ENCODE measurements at regions of chr2 and their contacts with region 1.

Region 1: GRCh38 chr2:239193925-239194677 is 206.7 kb downstream of the HDAC4 start:
- DNase-seq: peak in 1 of 2 experiments; percentile 55
- H3K4me3 ChIP-seq: no peak overlapping the region
- H3K27ac ChIP-seq: no peak overlapping the region
- H3K4me1 ChIP-seq: peaks cover 0 to 4% (median under 1%) of the 10 kb centered on the region in 4 experiments; a peak in 2 of 7 replicates
- H3K27me3 ChIP-seq: no peaks in the 10 kb centered on the region
- CTCF ChIP-seq: peak; percentile 49 to 74 (median 69)
- EP300 ChIP-seq: no peak
- POLR2A ChIP-seq: no peak
- RAD21 ChIP-seq: peak; percentile 53 to 60

Region 2: DNA sequence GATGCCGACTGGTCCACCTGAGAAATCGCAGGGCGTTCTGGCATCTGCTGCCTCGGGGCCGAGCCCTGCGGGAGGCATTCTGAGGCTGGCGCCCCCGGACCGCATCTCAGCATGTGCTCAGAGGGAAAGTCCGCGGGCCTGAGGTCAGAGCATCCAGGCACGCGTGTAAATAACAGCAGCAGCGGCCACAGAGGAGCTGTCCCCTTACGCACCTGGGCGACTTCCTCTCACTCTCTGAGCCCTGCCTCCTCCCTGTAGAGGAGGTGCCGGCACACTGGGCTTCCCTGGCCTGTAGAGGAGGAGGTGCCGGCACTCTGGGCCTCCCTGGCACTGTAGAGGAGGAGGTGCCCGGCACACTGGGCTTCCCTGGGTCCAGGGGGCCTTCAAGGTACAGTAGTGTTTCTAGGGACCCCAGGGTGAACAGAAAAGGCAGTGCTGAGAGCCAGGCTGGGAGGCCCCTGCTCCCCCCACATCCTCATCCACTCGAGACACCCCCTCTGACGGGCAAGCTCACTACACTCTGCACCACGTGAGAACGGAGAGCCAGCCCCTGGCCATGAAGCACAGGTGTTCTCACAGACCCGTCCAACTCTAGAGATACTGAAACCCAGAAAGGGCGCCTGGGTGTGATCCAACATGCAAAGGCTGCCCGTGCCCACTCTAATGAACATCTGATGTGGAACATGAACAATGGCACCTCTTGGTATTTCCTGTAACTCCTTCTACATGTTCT is 56.8 kb before region 1 on chr2:
- CTCF ChIA-PET with region 1: interaction called, 39 read pairs
- POLR2A ChIA-PET with region 1: no interaction called
- DNase-seq: no peak
- H3K4me3 ChIP-seq: no peak overlapping the region
- H3K27ac ChIP-seq: no peak overlapping the region
- H3K4me1 ChIP-seq: no peaks in the 10 kb centered on the region
- H3K27me3 ChIP-seq: no peaks in the 10 kb centered on the region
- CTCF ChIP-seq: no peak
- EP300 ChIP-seq: no peak
- POLR2A ChIP-seq: no peak
- RAD21 ChIP-seq: no peak

Region 3: DNA sequence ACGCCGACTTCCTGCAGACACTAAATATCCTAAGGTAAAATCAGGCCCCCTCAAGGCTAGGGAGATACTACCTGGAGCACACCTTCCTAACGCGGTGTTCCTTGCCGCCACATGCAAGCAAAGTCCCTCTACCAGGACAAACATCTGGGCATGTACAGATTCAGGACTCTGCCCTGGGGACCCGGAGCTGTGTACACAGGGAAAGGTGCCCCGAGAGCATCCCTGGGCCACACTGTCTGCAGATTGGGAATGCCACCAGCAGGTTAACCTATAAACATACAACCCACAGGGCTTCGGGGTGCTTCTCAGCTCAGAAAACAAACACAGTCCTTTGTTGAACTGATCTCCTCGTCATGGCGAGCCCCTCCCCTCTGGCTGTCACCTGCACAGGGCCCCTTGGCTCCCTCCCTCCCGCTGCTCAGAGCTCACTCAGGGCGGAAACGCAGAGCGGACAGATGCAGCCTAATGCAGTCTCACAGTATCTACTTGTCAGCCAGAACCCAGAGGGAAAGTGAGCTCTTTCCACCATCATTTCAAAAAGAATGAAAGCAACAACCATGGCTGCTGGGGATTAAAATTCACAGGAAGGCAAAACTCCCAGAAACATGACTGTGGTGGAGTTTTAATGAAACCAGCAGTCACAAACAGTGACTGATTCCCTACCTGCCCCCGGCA is 12.1 kb before region 1 on chr2:
- CTCF ChIA-PET with region 1: interaction called, 18 read pairs
- POLR2A ChIA-PET with region 1: no interaction called
- DNase-seq: no peak
- H3K4me3 ChIP-seq: no peak overlapping the region
- H3K27ac ChIP-seq: no peak overlapping the region
- H3K4me1 ChIP-seq: no peaks in the 10 kb centered on the region; a peak in 1 of 7 replicates
- H3K27me3 ChIP-seq: no peaks in the 10 kb centered on the region
- CTCF ChIP-seq: no peak
- EP300 ChIP-seq: no peak
- POLR2A ChIP-seq: no peak
- RAD21 ChIP-seq: no peak

Region 4: GRCh38 chr2:239204136-239204875 is 10.2 kb after region 1 on chr2:
- CTCF ChIA-PET with region 1: interaction called, 29 read pairs
- POLR2A ChIA-PET with region 1: no interaction called
- DNase-seq: no peak
- H3K4me3 ChIP-seq: no peak overlapping the region
- H3K27ac ChIP-seq: no peak overlapping the region
- H3K4me1 ChIP-seq: peaks cover 0 to 12% (median 3%) of the 10 kb centered on the region in 4 experiments; a peak in 4 of 7 replicates
- H3K27me3 ChIP-seq: no peaks in the 10 kb centered on the region
- CTCF ChIP-seq: no peak
- EP300 ChIP-seq: no peak
- POLR2A ChIP-seq: no peak
- RAD21 ChIP-seq: no peak

Region 5: GRCh38 chr2:239496700-239497099 is 302.6 kb after region 1 on chr2:
- CTCF ChIA-PET with region 1: no interaction called
- POLR2A ChIA-PET with region 1: no interaction called
- DNase-seq: no peak
- H3K4me3 ChIP-seq: no peak overlapping the region
- H3K27ac ChIP-seq: no peak overlapping the region
- H3K4me1 ChIP-seq: no peaks in the 10 kb centered on the region
- H3K27me3 ChIP-seq: no peaks in the 10 kb centered on the region
- CTCF ChIP-seq: no peak
- EP300 ChIP-seq: no peak
- POLR2A ChIP-seq: no peak
- RAD21 ChIP-seq: no peak

Measured in H1 (cell line).